Activated naive CD4-positive, alpha-beta T cell treated with anti-CD3 and anti-CD28 coated beads for 36 hours (primary cell): ENCODE measurements at regions of chr5 and their contacts with region 1.

Region 1: GRCh38 chr5:6820851-6821479 is 107.7 kb downstream of the TENT4A start:
- DNase-seq: peak; percentile 75
- H3K4me3 Mint-ChIP-seq: no peak overlapping the region
- H3K27ac Mint-ChIP-seq: no peak overlapping the region
- H3K4me1 Mint-ChIP-seq: no peaks in the 10 kb centered on the region
- H3K27me3 Mint-ChIP-seq: peaks cover 19% of the 10 kb centered on the region

Region 2: GRCh38 chr5:7391814-7392692 is 571.1 kb after region 1 on chr5:
- CTCF ChIA-PET with region 1: no interaction called
- intact Hi-C with region 1: loop called (anchors 2 kb)
- DNase-seq: no peak
- H3K4me3 Mint-ChIP-seq: no peak overlapping the region
- H3K27ac Mint-ChIP-seq: no peak overlapping the region
- H3K4me1 Mint-ChIP-seq: peaks cover 5% of the 10 kb centered on the region
- H3K27me3 Mint-ChIP-seq: peaks cover 23% of the 10 kb centered on the region

Region 3: DNA sequence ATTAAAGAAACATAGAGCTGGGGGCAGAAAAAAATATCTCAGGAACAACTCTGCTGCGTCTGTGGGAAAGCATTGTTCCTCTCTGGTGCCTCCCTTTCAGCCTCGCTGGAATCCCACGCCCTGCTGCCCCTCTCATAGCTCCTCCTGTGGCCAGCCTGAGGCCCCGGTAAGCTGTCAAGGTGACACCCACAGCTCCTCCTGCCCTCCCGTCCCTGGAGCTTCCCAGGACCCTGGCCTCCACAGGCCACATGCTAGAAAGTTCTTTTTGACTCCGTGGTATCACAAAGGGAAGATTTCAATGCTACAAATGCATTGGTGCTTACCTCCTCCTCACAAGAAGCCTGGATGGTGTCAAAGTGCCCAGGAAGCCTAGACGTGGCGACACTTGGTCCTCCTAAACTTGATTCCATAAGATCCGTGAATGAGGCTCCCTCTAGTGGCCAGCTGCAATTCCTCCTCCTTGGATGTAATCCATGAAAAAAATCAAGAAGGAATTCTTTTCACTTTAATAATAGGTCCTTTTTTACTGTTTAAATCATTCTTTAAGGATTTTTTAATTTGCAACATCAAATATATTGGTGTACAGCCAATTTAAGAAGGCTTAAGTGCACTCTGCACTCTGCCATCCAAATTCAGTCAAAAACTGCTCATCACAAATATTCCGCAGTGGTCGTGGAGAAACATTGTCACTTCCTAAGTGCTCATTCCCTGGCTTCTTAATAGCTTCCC is 925.1 kb after region 1 on chr5:
- CTCF ChIA-PET with region 1: no interaction called
- intact Hi-C with region 1: loop called (anchors 1 kb)
- DNase-seq: peak; percentile 69
- H3K4me3 Mint-ChIP-seq: no peak overlapping the region
- H3K27ac Mint-ChIP-seq: no peak overlapping the region
- H3K4me1 Mint-ChIP-seq: no peaks in the 10 kb centered on the region
- H3K27me3 Mint-ChIP-seq: peaks cover 6% of the 10 kb centered on the region